ENCODE measurements at regions of chr19 and their contacts with region 1.

Region 1: GRCh38 chr19:46339446-46339845 is 7.4 kb upstream of the PPP5C start:
- DNase-seq: no peak
- H3K4me3 ChIP-seq: no peak overlapping the region
- CTCF ChIP-seq: no peak
- POLR2A ChIP-seq: no peak

Region 2: DNA sequence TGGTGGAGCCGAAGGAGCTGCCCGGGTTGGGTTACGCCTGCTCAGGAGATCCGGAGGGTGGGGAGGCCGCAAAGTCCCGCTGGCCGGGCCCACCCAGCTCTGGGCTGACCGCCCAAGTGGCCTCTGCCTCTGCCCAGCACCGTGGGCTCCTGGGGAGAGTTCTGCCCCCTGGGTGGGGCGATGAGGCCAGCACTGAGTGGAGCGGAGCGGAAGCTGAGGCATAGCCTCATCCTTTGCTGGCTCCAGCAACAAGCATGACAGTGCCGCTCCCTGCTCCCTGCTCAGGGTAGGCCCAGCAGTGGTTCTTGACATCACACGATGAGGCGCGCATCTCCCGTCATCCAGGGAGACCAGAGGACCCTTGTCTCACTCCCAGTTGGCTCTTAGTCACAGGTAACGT is 51.4 kb after region 1 on chr19:
- intact Hi-C with region 1: loop called (anchors 1 kb)
- DNase-seq: no peak
- H3K4me3 ChIP-seq: no peak overlapping the region
- CTCF ChIP-seq: no peak
- POLR2A ChIP-seq: no peak

Region 3: DNA sequence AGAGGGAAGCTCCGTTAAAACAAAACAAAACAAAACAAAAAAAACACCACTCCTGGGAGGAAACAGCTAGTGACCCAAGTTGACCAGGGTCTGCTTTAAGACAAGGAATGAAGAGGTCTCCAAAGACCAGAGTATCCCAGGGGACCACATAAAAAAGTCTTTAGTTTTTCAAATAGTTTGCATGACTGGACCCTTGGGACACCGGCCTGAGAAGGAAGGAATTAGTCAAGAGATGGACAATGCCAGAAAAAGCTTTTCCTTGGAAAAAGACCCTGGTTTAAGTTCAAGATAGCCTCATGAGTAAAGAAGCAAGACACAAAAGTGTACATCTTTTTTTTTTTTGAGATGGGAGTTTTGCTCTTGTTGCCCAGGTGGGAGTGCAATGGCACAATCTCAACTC is 168.8 kb after region 1 on chr19:
- intact Hi-C with region 1: loop called (anchors 1 kb)
- DNase-seq: no peak
- H3K4me3 ChIP-seq: no peak overlapping the region
- CTCF ChIP-seq: no peak
- POLR2A ChIP-seq: no peak